Activated B cell treated with CpG ODN at 0.5 μM for 24 hours (primary cell): ENCODE measurements at regions of chr2 and their contacts with region 1.

Region 1: GRCh38 chr2:157443795-157444640 is at the start of gene CYTIP:
- DNase-seq: peak; percentile 52
- ATAC-seq: peak; percentile 53
- H3K4me3 Mint-ChIP-seq: peak within 1 kb of the TSS; percentile 95
- H3K27ac Mint-ChIP-seq: peak within 1 kb of the TSS; percentile 96
- H3K4me1 Mint-ChIP-seq: peaks cover 61% of the 10 kb centered on the region
- H3K27me3 Mint-ChIP-seq: no peaks in the 10 kb centered on the region
- CTCF ChIP-seq: no peak
- total RNA-seq, gene CYTIP: 129 and 130 TPM in 2 replicates

Region 2: DNA sequence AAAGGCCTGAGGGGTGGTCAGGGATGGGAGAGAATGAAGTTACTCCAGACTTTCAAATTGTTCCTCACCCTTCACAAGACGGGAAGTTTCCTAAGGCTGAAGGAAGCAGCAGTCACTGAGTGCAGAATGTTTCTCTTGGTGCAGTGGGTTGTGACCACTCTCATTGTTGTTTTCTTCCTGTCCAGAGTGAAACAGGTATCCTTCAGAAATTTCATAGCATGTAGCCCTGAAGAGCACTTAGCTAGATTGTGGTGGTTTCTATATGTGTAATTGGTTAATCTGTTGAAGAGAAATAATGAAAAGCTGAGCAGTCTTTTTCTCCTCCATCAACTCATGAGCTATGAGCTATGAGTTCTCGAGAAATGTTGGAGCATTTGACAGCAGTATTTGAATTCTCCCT is 911.0 kb before region 1 on chr2:
- CTCF ChIA-PET with region 1: no interaction called
- POLR2A ChIA-PET with region 1: no interaction called
- intact Hi-C with region 1: no loop called
- DNase-seq: no peak
- ATAC-seq: no peak
- H3K4me3 Mint-ChIP-seq: no peak overlapping the region
- H3K27ac Mint-ChIP-seq: no peak overlapping the region
- H3K4me1 Mint-ChIP-seq: peaks cover 22% of the 10 kb centered on the region
- H3K27me3 Mint-ChIP-seq: no peaks in the 10 kb centered on the region
- CTCF ChIP-seq: no peak

Region 3: DNA sequence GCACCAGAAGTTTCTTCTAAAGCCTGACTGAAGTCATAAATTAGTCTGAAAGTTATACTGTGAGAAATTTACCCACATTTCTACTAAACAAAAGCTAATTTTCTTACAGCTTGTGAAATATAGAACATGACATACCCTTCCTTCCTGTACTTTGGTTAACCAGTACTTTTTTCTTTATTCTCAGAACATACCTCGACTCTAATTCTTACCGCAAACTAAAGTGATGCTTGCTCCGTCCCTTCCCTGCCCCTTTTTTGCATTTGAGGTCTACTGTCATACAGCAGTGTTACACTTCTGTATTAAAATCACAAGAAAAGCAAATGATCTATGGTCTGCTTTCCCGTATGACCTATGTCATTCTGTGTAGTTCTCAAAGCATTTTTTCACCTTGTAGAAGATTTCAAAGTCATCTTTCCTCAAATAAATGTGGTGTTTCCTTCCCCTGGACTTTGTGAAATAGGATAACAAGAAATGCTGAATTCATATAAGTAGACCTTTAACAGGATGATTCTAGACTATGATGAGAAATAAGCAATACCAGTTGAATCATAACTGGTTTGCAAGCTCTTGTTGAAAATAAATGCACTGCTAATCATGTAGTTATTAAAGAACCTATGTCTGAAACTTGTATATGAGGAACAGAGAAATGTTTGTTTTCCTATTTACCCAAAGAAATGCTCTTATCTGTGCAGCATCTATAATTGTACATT is 30.5 kb before region 1 on chr2:
- CTCF ChIA-PET with region 1: interaction called, 4 read pairs
- POLR2A ChIA-PET with region 1: interaction called, 185 read pairs
- intact Hi-C with region 1: no loop called
- DNase-seq: no peak
- ATAC-seq: peak; percentile 80
- H3K4me3 Mint-ChIP-seq: peak overlapping the region; percentile 42
- H3K27ac Mint-ChIP-seq: peak overlapping the region; percentile 84
- H3K4me1 Mint-ChIP-seq: peaks cover 79% of the 10 kb centered on the region
- H3K27me3 Mint-ChIP-seq: no peaks in the 10 kb centered on the region
- CTCF ChIP-seq: no peak

Region 4: DNA sequence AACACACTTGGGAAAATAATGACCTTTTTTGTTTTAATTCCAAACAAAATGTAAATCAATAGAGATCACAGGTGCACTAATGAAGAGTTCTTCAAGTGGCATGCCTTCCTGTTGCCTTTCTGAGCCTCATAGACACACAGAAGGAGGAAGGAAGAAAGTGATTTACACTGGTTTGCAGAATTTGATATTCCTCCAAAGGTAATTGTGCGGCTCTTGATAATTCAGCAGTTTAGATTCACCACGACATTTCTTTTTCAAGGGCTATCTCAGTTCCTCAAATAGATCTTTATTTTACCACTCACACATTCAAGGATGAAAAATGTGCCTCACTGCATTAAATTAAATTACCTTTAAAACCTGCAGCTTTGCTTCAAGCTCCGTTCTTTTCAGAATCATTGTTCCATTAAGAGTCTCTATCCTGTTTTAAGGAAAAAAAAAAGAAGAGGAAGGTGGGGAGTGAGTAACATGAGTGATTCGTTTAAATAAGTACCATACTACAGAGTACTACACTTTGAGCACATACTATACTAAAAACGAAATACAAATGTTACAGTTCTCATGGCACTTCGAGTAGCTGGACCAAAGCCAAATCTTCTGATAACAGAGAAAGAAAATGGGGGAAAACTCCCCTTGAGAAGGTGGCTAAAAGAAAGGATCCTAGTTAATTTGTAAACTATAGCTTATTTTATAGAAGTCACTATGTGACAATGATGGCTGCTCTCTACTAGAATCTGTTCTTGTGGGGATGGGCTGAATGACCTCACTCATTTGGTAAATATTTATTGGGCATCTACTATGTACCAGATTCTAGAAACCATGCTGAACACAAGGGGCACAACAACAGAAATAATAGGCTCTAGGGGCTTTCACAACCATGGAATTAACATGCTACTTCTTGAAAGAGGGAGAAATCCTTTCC is 16.8 kb before region 1 on chr2:
- CTCF ChIA-PET with region 1: interaction called, 7 read pairs
- POLR2A ChIA-PET with region 1: interaction called, 185 read pairs
- intact Hi-C with region 1: loop called (anchors 1 kb)
- DNase-seq: no peak
- ATAC-seq: peak; percentile 37
- H3K4me3 Mint-ChIP-seq: no peak overlapping the region
- H3K27ac Mint-ChIP-seq: peak overlapping the region; percentile 71
- H3K4me1 Mint-ChIP-seq: peaks cover 51% of the 10 kb centered on the region
- H3K27me3 Mint-ChIP-seq: no peaks in the 10 kb centered on the region
- CTCF ChIP-seq: no peak

Region 5: DNA sequence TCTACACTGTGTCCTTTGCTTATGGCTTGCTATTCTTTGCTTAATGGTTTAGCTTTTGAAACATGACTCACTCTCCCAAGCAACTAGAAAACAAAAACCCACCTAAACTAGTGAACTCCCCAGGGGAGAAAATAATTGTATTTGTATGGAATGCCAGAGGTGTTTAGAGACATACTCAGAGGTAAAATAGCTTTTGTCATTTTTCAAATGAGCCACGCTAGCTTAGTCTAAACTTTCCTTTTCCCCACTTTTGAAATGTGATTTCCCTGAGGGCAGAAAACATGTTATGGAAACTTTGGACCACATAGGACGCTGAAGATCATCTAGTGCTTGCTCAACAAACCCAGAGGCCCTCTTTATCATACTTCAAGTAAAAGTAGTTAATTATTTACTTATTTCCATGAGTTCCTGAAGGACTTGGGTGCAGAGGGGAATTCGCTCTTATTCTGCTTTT is 16.4 kb after region 1 on chr2:
- CTCF ChIA-PET with region 1: interaction called, 6 read pairs
- POLR2A ChIA-PET with region 1: interaction called, 201 read pairs
- intact Hi-C with region 1: loop called (anchors 1 kb)
- DNase-seq: no peak
- ATAC-seq: no peak
- H3K4me3 Mint-ChIP-seq: no peak overlapping the region
- H3K27ac Mint-ChIP-seq: no peak overlapping the region
- H3K4me1 Mint-ChIP-seq: peaks cover 15% of the 10 kb centered on the region
- H3K27me3 Mint-ChIP-seq: no peaks in the 10 kb centered on the region
- CTCF ChIP-seq: no peak

Region 6: GRCh38 chr2:157876066-157876787 is 432.2 kb after region 1 on chr2 and contains the start of gene ACVR1:
- CTCF ChIA-PET with region 1: no interaction called
- POLR2A ChIA-PET with region 1: interaction called, 3 read pairs
- intact Hi-C with region 1: loop called (anchors 2 kb)
- DNase-seq: peak; percentile 76
- ATAC-seq: peak; percentile 80
- H3K4me3 Mint-ChIP-seq: peak within 1 kb of the TSS; percentile 88
- H3K27ac Mint-ChIP-seq: peak within 1 kb of the TSS; percentile 76
- H3K4me1 Mint-ChIP-seq: peaks cover 21% of the 10 kb centered on the region
- H3K27me3 Mint-ChIP-seq: no peaks in the 10 kb centered on the region
- CTCF ChIP-seq: no peak
- total RNA-seq, gene ACVR1: 4.4 and 4.6 TPM in 2 replicates